SK-N-SH (cell line): ENCODE measurements at regions of chr12 and their contacts with region 1.

Region 1: GRCh38 chr12:113980537-113981337 is 14.6 kb upstream of the RBM19 start:
- DNase-seq: peak; percentile 57
- H3K4me3 ChIP-seq: peak overlapping the region in 1 of 2 experiments; percentile 20; a peak in 1 of 4 replicates
- H3K27ac ChIP-seq: no peak overlapping the region
- H3K4me1 ChIP-seq: no peaks in the 10 kb centered on the region
- H3K27me3 ChIP-seq: peaks cover 26% of the 10 kb centered on the region; the same call in 1 of the 2 replicates
- CTCF ChIP-seq: peak; percentile 97
- EP300 ChIP-seq: no peak
- RAD21 ChIP-seq: peak; percentile 96

Region 2: GRCh38 chr12:113933201-113933786 is 47.4 kb before region 1 on chr12:
- CTCF ChIA-PET with region 1: no interaction called
- POLR2A ChIA-PET with region 1: no interaction called
- DNase-seq: no peak
- H3K4me3 ChIP-seq: no peak overlapping the region
- H3K27ac ChIP-seq: no peak overlapping the region
- H3K4me1 ChIP-seq: no peaks in the 10 kb centered on the region
- H3K27me3 ChIP-seq: no peaks in the 10 kb centered on the region
- CTCF ChIP-seq: no peak
- EP300 ChIP-seq: no peak
- RAD21 ChIP-seq: no peak

Region 3: GRCh38 chr12:113965951-113966797 is 14.6 kb before region 1 on chr12 and contains the start of gene RBM19:
- CTCF ChIA-PET with region 1: interaction called, 73 read pairs
- POLR2A ChIA-PET with region 1: interaction called, 3 read pairs
- DNase-seq: peak; percentile 95
- H3K4me3 ChIP-seq: peak within 1 kb of the TSS; percentile 80 to 93
- H3K27ac ChIP-seq: peak within 1 kb of the TSS; percentile 23 to 39; a peak in 2 of 4 replicates
- H3K4me1 ChIP-seq: peaks cover 0 to 9% of the 10 kb centered on the region in 2 experiments; a peak in 3 of 4 replicates
- H3K27me3 ChIP-seq: peaks cover 17% of the 10 kb centered on the region; the same call in 1 of the 2 replicates
- CTCF ChIP-seq: peak; percentile 93
- EP300 ChIP-seq: no peak
- RAD21 ChIP-seq: peak; percentile 55
- polyA plus RNA-seq, gene RBM19: 16.6 and 20.3 TPM in 2 replicates

Region 4: GRCh38 chr12:114166362-114166761 is 185.6 kb after region 1 on chr12:
- CTCF ChIA-PET with region 1: interaction called, 15 read pairs
- POLR2A ChIA-PET with region 1: no interaction called
- DNase-seq: peak; percentile 34
- H3K4me3 ChIP-seq: peak overlapping the region in 1 of 2 experiments; percentile 41; a peak in 1 of 4 replicates
- H3K27ac ChIP-seq: no peak overlapping the region
- H3K4me1 ChIP-seq: no peaks in the 10 kb centered on the region
- H3K27me3 ChIP-seq: no peaks in the 10 kb centered on the region; the same call in 1 of the 2 replicates
- CTCF ChIP-seq: peak; percentile 66
- EP300 ChIP-seq: no peak
- RAD21 ChIP-seq: peak; percentile 70

Region 5: GRCh38 chr12:114491916-114492315 is 511.2 kb after region 1 on chr12:
- CTCF ChIA-PET with region 1: interaction called, 10 read pairs
- POLR2A ChIA-PET with region 1: no interaction called
- DNase-seq: no peak
- H3K4me3 ChIP-seq: no peak overlapping the region
- H3K27ac ChIP-seq: no peak overlapping the region
- H3K4me1 ChIP-seq: no peaks in the 10 kb centered on the region
- H3K27me3 ChIP-seq: no peaks in the 10 kb centered on the region; the same call in 1 of the 2 replicates
- CTCF ChIP-seq: no peak
- EP300 ChIP-seq: no peak
- RAD21 ChIP-seq: no peak

Region 6: GRCh38 chr12:114508529-114509129 is 527.9 kb after region 1 on chr12:
- CTCF ChIA-PET with region 1: interaction called, 89 read pairs
- POLR2A ChIA-PET with region 1: no interaction called
- DNase-seq: peak; percentile 64
- H3K4me3 ChIP-seq: no peak overlapping the region; a peak in 1 of 4 replicates
- H3K27ac ChIP-seq: no peak overlapping the region
- H3K4me1 ChIP-seq: no peaks in the 10 kb centered on the region
- H3K27me3 ChIP-seq: peaks cover 14% of the 10 kb centered on the region; the same call in 1 of the 2 replicates
- CTCF ChIP-seq: peak; percentile 83
- EP300 ChIP-seq: no peak
- RAD21 ChIP-seq: peak; percentile 79